Psoas muscle (tissue), 8 donors: ENCODE measurements at regions of chr11 and their contacts with region 1.

Region 1: GRCh38 chr11:118290923-118291322 is 13.6 kb upstream of the CD3E start:
- DNase-seq: no peak
- ATAC-seq: peak in 1 of 4 donors; percentile 24
- H3K4me3 ChIP-seq: no peak overlapping the region
- H3K27ac ChIP-seq: no peak overlapping the region
- H3K4me1 ChIP-seq: no peaks in the 10 kb centered on the region
- H3K27me3 ChIP-seq: peaks cover 0 to 3% (median 0%) of the 10 kb centered on the region in 3 donors
- CTCF ChIP-seq: peak; percentile 10

Region 2: DNA sequence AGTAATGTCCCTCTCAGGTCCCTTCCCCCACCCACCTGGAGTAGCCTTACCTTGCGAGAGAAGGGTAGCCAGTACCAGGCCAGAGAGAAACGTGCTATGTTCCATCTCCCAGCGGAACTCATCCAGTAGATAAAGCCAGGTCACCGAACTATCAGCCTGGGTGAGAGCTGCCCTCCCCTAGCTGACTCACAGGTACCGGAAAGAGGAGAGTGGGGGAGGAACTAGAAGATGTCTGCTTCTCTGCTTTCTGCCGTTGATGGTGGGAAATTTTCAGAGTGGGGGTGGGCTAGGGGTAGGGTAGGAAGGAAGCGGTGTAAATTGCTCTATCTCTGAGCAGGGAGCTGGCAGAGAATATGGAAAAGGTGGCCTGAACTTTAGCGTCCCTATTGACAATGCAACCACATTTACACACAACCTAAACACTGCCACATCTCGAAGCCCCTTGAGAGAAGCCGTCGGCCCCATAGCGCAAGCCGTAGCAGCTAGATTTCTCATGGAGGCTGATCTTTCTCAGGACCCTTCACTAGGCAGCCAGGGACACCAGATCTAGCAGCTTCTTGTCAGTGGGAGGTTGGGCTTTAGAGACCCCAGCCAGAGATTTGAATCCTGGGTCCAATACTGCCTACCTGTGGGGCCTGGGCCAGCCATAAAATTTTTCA is 51.7 kb after region 1 on chr11 and contains the start of gene CD3D:
- intact Hi-C with region 1: loop called in 1 of 2 experiments (anchors 10 kb)
- DNase-seq: no peak
- ATAC-seq: no peak
- H3K4me3 ChIP-seq: no peak within 1 kb of the TSS
- H3K27ac ChIP-seq: no peak within 1 kb of the TSS
- H3K4me1 ChIP-seq: no peaks in the 10 kb centered on the region
- H3K27me3 ChIP-seq: peaks cover 0 to 2% (median 0%) of the 10 kb centered on the region in 3 donors
- CTCF ChIP-seq: no peak
- total RNA-seq, gene CD3D: 0.45 to 0.81 (median 0.50) TPM in 3 of 4 donors, not detected in the other

Region 3: GRCh38 chr11:118488480-118489109 is 197.7 kb after region 1 on chr11:
- intact Hi-C with region 1: loop called in 1 of 2 experiments (anchors 10 kb)
- DNase-seq: peak; percentile 56 to 73
- ATAC-seq: peak; percentile 61 to 89 (median 69)
- H3K4me3 ChIP-seq: no peak overlapping the region
- H3K27ac ChIP-seq: no peak overlapping the region
- H3K4me1 ChIP-seq: no peaks in the 10 kb centered on the region
- H3K27me3 ChIP-seq: no peaks in the 10 kb centered on the region
- CTCF ChIP-seq: peak; percentile 76